Aorta (tissue), 5 donors: ENCODE measurements at regions of chr13 and their contacts with region 1.

Region 1: GRCh38 chr13:74133657-74134201 is 475 bp downstream of the KLF12 start:
- DNase-seq: peak; percentile 91 to 92
- ATAC-seq: peak; percentile 84
- H3K4me3 ChIP-seq: peak overlapping the region; percentile 88 to 95
- H3K27ac ChIP-seq: peak overlapping the region; percentile 75 to 80
- H3K4me1 ChIP-seq: peaks cover 2 to 3% of the 10 kb centered on the region in 2 donors
- H3K27me3 ChIP-seq: no peaks in the 10 kb centered on the region

Region 2: DNA sequence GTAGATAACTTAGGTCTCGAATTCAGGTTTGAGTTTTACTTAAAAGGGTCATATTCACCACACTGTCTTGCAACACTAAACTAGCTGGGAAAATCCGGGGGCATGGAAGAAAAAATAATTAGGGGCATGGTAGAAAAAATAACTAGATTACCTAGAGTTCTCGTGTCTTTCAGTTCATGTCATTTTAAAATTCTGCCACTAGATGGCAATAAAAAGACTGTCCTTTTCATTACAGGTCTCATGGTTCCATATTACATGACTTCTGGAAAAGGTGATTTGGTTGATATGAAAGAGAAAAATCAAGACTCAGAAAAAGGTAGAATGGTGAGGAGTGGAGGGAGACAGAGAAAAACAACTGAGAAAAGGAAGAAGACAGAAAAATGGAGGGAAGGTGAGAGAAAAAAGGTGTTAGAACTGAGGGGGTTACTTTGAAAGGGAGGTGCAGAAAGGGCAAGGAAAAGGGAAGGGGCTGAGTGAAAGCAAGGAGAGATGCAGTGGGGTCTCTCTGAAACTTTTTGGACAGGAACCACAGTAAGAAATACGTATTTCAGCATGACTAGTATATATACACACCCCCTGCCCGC is 298.5 kb before region 1 on chr13:
- intact Hi-C with region 1: loop called (anchors 5 kb)
- DNase-seq: no peak
- ATAC-seq: peak; percentile 62
- H3K4me3 ChIP-seq: no peak overlapping the region
- H3K27ac ChIP-seq: no peak overlapping the region
- H3K4me1 ChIP-seq: peaks cover 0 to 3% of the 10 kb centered on the region in 2 donors
- H3K27me3 ChIP-seq: no peaks in the 10 kb centered on the region

Region 3: DNA sequence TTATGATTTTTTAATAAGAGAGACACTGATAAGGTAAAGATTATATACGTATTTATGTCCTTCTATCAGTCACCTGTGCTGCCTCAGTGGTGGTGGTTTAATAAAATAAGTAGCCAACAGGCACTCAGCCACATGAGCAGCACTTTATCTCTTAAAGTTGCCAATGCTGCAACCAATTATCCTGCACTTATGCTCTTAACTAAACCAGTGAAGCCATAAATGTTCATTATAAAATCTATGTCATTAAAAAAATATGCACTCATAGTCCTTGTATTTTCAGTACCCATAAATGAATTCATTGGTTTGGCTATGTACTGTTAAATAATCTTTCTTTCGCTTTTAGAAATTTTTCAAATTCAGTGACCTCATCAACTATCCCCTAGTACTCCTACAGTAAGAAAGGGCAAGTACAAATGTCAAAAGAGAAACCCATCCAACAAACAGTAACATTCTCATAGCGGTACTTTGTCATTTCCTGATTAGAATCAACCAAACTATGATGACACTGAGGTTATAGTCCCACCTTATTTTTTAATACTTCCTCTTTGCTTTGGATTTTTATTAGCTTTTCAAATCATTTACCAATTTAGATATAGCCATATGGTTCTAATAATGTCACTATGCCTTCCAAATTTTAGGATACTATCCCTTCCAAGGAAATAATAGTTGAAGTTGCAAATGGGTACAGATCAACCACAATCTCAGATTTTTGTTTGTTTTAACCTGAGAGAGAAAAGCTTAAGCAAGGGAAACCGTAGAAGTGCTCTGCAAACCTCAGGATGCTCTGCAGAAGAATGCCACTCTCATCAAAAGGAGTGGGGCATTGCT is 190.4 kb before region 1 on chr13:
- intact Hi-C with region 1: loop called in 1 of 2 experiments (anchors 10 kb)
- DNase-seq: no peak
- ATAC-seq: no peak
- H3K4me3 ChIP-seq: no peak overlapping the region
- H3K27ac ChIP-seq: no peak overlapping the region
- H3K4me1 ChIP-seq: peaks cover 0 to 5% of the 10 kb centered on the region in 2 donors
- H3K27me3 ChIP-seq: no peaks in the 10 kb centered on the region

Region 4: DNA sequence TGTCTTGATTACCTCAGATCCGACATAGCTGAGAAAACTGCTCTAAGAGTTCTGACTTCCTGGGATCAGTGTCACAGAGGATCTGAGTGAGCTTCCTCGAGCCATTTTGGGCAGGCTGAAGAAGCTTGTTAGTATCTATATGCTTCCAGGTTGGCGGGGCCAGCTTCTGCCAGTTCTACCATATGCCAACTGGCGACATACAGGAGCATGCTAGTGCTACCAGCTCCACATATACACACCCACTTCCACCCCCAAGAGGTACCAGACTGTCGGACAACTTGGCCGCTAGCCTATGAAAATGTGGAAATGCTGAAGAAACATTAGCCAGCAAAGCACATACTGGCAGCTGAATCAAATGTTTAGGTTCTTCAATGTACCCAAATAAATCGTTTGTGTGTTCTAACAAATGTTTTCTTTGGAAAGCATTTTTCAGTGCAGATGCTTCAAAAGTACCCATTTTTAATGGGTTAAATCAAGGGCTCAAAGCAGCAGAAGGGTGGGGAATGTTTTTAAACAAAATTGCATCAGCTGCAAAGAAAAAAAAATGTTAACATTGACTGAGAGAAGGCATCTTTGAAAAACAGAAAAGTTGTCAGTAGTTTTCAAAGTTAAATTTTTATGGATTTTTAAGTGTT is 163.2 kb before region 1 on chr13:
- intact Hi-C with region 1: loop called in 1 of 2 experiments (anchors 10 kb)
- DNase-seq: no peak
- ATAC-seq: peak; percentile 9
- H3K4me3 ChIP-seq: no peak overlapping the region
- H3K27ac ChIP-seq: no peak overlapping the region
- H3K4me1 ChIP-seq: peaks cover 0 to 7% of the 10 kb centered on the region in 2 donors
- H3K27me3 ChIP-seq: no peaks in the 10 kb centered on the region

Region 5: DNA sequence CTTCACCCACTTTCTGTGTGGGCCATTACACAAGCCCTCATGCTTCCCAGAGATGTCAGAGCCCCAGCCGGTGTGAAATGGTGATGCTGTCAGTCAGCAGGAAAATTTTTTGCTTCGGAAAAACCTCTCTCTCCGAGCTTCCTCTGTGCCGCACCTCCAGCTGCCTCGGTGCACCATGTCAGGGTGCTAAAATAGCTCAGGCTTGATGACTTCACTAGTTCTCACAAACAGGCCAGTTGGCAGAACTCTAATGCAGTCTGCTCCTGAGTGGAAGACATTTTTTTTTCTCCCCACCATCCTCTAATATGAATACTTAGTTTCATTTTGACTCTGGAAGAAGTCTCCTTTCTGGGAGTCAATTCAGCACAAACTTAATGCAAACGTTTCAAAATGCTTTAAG is 70.8 kb before region 1 on chr13:
- intact Hi-C with region 1: loop called in 1 of 2 experiments (anchors 5 kb)
- DNase-seq: peak; percentile 80 to 85
- ATAC-seq: peak; percentile 88
- H3K4me3 ChIP-seq: peak overlapping the region; percentile 42 to 72
- H3K27ac ChIP-seq: peak overlapping the region; percentile 67 to 95
- H3K4me1 ChIP-seq: peaks cover 2 to 14% of the 10 kb centered on the region in 2 donors
- H3K27me3 ChIP-seq: no peaks in the 10 kb centered on the region

Region 6: GRCh38 chr13:74287724-74288169 is 154.0 kb after region 1 on chr13:
- intact Hi-C with region 1: loop called (anchors 5 kb)
- DNase-seq: peak; percentile 90 to 94
- ATAC-seq: peak; percentile 76
- H3K4me3 ChIP-seq: peak overlapping the region in 1 of 2 donors; percentile 38
- H3K27ac ChIP-seq: no peak overlapping the region
- H3K4me1 ChIP-seq: peaks cover 0 to 3% of the 10 kb centered on the region in 2 donors
- H3K27me3 ChIP-seq: no peaks in the 10 kb centered on the region